ENCODE measurements at regions of chrX and their contacts with region 1.

Region 1: GRCh38 chrX:103817502-103817901 is 14.6 kb downstream of the RAB9B start:
- DNase-seq: peak; percentile 79
- H3K4me3 Mint-ChIP-seq: no peak overlapping the region
- H3K27ac Mint-ChIP-seq: no peak overlapping the region
- H3K4me1 Mint-ChIP-seq: no peaks in the 10 kb centered on the region
- H3K27me3 Mint-ChIP-seq: peaks cover 16% of the 10 kb centered on the region

Region 2: DNA sequence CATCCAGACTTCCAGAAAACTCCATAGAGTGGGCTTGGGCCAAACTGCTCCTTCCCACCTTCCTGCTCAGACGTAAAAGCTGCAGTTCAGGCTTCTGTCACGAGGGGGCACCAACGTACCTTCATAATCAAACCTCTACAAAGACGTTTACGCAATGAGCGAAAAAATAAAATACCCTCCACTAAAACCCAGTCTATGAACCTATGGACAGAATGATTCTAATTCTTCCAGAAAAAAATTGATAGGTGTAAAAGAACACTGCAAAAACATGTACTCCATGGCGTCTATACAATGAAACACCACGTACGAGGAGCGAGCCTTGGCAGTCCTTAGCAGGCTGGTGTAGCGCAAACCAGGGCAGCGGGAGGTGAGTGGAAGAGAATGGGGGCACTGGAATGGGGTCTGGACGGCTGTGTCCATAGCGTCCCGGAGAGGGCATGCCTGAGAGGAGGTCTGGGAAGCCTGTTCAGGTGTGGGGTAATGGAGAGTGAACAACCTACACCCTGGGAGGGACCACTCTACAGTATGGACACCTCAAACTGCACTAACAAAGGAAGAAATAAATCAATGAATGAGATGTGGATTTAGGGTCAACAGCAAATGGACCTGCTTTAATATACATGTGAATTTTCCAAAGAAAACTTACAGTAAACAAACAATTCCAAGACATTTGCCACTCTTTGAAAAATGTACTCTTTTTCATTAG is 283.8 kb before region 1 on chrX:
- intact Hi-C with region 1: loop called (anchors 1 kb)
- DNase-seq: peak; percentile 88
- H3K4me3 Mint-ChIP-seq: peak overlapping the region; percentile 78
- H3K27ac Mint-ChIP-seq: no peak overlapping the region
- H3K4me1 Mint-ChIP-seq: peaks cover 4% of the 10 kb centered on the region
- H3K27me3 Mint-ChIP-seq: peaks cover 5% of the 10 kb centered on the region

Region 3: GRCh38 chrX:103711533-103712369 is 105.8 kb before region 1 on chrX:
- intact Hi-C with region 1: loop called (anchors 1 kb)
- DNase-seq: peak; percentile 84
- H3K4me3 Mint-ChIP-seq: no peak overlapping the region
- H3K27ac Mint-ChIP-seq: no peak overlapping the region
- H3K4me1 Mint-ChIP-seq: no peaks in the 10 kb centered on the region
- H3K27me3 Mint-ChIP-seq: peaks cover 4% of the 10 kb centered on the region

Region 4: GRCh38 chrX:103742339-103742738 is 75.2 kb before region 1 on chrX:
- intact Hi-C with region 1: no loop called
- DNase-seq: no peak
- H3K4me3 Mint-ChIP-seq: no peak overlapping the region
- H3K27ac Mint-ChIP-seq: no peak overlapping the region
- H3K4me1 Mint-ChIP-seq: no peaks in the 10 kb centered on the region
- H3K27me3 Mint-ChIP-seq: peaks cover 2% of the 10 kb centered on the region